Ascending aorta (tissue), 2 donors: ENCODE measurements at regions of chr19 and their contacts with region 1.

Region 1: DNA sequence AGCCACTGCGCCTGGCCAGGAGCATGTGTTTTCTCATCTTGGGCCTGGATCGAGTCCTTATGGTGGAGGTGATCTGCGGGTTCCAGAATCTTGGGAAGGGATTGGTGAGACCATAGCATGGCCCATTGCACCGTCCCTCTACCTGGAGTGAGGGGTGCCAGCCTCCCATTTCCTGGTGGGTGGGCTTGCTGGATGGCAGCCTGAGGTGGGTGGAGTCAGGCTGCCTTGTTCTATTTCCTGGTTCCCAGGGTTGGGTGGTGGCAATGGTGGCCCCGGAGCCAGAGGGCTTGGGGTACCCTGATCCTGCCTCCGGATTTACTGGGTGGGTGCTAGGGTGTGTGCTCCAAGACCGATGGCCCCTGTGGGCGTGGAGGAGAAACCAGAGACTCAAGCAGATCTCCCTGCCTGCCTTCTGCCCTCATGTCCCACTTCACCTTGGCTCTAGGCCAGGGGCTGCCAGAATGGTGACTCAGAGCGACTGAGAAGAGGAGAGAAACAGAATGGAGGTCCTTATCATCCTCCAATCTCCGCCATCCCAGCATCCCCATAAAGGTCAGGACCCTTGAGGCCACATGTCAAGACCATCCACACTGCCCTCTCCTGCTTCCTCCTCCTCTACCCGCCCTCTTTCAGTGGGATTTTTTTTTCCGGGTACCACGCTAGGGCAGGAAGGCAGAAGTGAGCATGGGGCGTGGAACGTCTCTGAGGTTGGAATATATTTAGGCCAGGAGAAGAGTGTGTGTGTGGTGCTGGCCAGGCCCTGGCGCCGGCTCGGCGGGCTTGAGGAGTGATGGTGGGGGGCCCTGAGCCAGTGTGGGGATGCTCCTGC is 22.1 kb downstream of the IER2 start:
- DNase-seq: peak; percentile 80 to 95
- H3K4me3 ChIP-seq: peak overlapping the region in 1 of 2 donors; percentile 37
- H3K27ac ChIP-seq: peak overlapping the region; percentile 88 to 90
- H3K4me1 ChIP-seq: peaks cover 2 to 22% of the 10 kb centered on the region in 2 donors
- H3K27me3 ChIP-seq: no peaks in the 10 kb centered on the region
- CTCF ChIP-seq: no peak

Region 2: DNA sequence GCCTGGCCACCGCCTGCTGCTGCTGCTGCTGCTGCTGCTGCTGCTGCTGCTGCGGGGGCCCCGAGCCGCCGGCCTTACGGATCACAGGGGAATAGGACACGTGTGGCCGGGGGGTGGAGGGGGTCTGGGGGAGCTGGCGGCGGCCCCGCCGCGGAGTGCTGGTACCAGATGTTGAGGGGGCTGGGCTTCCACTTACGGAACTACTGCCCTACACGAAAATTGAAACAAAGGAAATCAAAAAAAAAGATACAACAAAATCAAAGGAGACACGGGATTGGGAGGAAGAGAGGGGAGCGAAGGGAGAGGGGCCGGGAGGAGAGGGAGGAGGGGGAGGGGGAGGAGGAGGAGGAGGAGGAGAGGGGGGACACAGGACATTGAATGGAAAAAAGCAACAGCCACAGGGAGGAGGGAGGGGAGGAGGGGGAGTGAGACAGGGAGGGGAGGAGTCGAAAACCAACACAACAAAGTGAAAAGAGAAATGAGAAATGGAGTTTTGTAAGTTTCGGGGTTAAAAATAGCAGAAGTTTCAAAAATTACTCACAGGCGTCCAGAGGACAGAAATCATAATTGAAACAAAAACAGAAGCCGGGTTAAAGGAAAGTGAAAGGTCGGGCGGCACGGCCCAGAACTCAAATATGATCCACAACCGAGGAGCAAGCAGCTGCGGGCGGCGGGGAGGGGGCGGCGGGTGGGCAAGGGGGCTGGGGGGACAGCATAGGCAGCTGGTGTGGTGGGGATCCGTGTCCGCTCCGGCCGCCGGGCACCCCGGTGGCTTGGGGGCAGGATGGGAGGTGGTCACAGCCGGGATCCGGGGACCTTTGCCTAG is 35.8 kb after region 1 on chr19:
- intact Hi-C with region 1: loop called (anchors 5 kb)
- DNase-seq: peak in 1 of 2 donors; percentile 80
- H3K4me3 ChIP-seq: peak overlapping the region; percentile 64 to 80
- H3K27ac ChIP-seq: peak overlapping the region; percentile 85 to 88
- H3K4me1 ChIP-seq: peaks cover 3 to 9% of the 10 kb centered on the region in 2 donors
- H3K27me3 ChIP-seq: no peaks in the 10 kb centered on the region
- CTCF ChIP-seq: no peak

Region 3: GRCh38 chr19:13220847-13221246 is 48.6 kb after region 1 on chr19:
- intact Hi-C with region 1: no loop called
- DNase-seq: no peak
- H3K4me3 ChIP-seq: no peak overlapping the region
- H3K27ac ChIP-seq: no peak overlapping the region
- H3K4me1 ChIP-seq: no peaks in the 10 kb centered on the region
- H3K27me3 ChIP-seq: no peaks in the 10 kb centered on the region
- CTCF ChIP-seq: no peak